IMR-90 (cell line): ENCODE measurements at regions of chr13 and their contacts with region 1.

Region 1: GRCh38 chr13:97809576-97809975 is 143.9 kb upstream of the IPO5 start:
- DNase-seq: peak; percentile 6
- ATAC-seq: no peak
- H3K4me3 ChIP-seq: no peak overlapping the region
- H3K27ac ChIP-seq: no peak overlapping the region
- H3K4me1 ChIP-seq: no peaks in the 10 kb centered on the region
- H3K27me3 ChIP-seq: peaks cover 8% of the 10 kb centered on the region
- CTCF ChIP-seq: no peak
- POLR2A ChIP-seq: no peak
- RAD21 ChIP-seq: no peak

Region 2: DNA sequence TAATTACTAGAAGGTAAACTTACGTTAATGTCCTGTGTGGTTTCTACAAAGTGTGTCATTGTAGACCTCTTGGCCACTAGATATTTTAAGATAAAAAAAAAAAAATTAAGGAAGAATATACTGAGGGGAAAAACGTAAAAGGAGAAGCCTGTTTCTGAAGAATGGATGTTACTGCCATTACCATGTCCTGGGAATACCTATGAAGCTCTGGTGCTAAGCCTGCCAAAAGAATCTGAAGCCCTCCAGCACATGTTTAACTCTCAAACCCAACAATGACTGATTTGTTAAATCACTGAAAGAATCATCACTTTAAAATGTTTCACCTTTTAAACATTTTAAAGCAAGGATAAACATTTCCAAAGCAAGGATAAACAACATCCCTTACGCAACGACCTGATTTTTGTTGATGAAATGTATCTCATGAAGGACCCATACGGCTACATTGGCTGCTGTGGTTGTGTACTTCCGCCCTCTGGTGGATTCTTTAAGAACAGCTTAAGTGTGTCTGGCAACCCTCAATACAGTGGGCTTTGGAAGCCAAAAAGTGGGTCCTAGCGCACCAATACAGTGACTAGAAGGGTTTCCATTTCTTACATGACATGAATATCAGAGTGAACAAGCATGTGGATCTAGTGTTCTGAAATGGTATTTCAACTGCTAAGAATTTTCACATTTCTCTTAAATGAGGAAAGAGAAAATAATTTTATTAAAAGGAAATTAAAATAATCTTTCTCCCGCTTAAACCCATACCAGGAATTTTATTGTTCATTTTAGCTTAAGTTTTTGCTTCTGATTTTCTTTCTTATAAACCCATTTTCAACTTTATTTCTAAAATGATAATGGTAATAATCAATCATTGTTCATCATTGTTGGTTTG is 450.2 kb before region 1 on chr13:
- CTCF ChIA-PET with region 1: no interaction called
- POLR2A ChIA-PET with region 1: no interaction called
- dilution Hi-C with region 1: no loop called
- in situ Hi-C with region 1: no loop called
- intact Hi-C with region 1: loop called (anchors 10 kb)
- DNase-seq: peak; percentile 92
- ATAC-seq: peak; percentile 95
- H3K4me3 ChIP-seq: no peak overlapping the region
- H3K27ac ChIP-seq: no peak overlapping the region
- H3K4me1 ChIP-seq: peaks cover 3% of the 10 kb centered on the region; the same call in 1 of the 2 replicates
- H3K27me3 ChIP-seq: no peaks in the 10 kb centered on the region
- CTCF ChIP-seq: peak; percentile 81
- POLR2A ChIP-seq: 0 out of 2 replicates have a peak, but pooled peaks have one; percentile 37
- RAD21 ChIP-seq: peak; percentile 91

Region 3: GRCh38 chr13:97395447-97396136 is 414.0 kb before region 1 on chr13:
- CTCF ChIA-PET with region 1: no interaction called
- POLR2A ChIA-PET with region 1: no interaction called
- dilution Hi-C with region 1: no loop called
- in situ Hi-C with region 1: no loop called
- intact Hi-C with region 1: loop called (anchors 10 kb)
- DNase-seq: peak; percentile 66
- ATAC-seq: peak; percentile 67
- H3K4me3 ChIP-seq: no peak overlapping the region
- H3K27ac ChIP-seq: peak overlapping the region; percentile 36; the same call in 1 of the 2 replicates
- H3K4me1 ChIP-seq: peaks cover 5% of the 10 kb centered on the region
- H3K27me3 ChIP-seq: no peaks in the 10 kb centered on the region
- CTCF ChIP-seq: no peak
- POLR2A ChIP-seq: no peak
- RAD21 ChIP-seq: no peak

Region 4: DNA sequence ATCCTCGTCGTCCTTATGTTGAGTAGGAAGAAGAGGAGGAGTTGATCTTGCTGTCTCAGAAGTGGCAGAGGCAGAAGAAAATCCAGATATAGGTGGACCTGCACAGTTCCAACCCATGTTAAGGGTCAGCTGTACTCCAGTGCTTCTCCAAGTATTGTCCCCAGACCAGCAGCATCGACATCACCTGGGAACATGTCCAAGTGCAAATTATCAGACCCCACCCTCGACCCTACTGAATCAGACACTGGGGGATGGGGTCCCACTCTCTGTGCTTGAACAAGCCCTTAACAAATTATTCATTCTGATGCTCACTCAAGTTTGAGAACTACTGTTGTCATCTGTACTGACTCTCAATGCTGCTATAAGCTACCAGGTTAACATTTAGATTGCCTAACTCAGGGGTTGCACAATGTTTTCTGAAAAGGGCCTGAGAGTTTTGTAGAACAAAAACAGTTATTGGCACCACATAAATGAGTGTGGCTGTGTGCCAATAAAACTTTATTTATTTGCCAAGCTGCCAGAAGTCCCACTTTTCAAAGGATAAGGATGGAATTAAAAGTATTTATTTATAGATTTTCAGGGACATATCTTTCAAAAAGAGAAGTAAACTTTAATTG is 82.8 kb before region 1 on chr13:
- CTCF ChIA-PET with region 1: no interaction called
- POLR2A ChIA-PET with region 1: no interaction called
- dilution Hi-C with region 1: no loop called
- in situ Hi-C with region 1: no loop called
- intact Hi-C with region 1: no loop called
- DNase-seq: no peak
- ATAC-seq: no peak
- H3K4me3 ChIP-seq: no peak overlapping the region
- H3K27ac ChIP-seq: no peak overlapping the region
- H3K4me1 ChIP-seq: no peaks in the 10 kb centered on the region
- H3K27me3 ChIP-seq: no peaks in the 10 kb centered on the region
- CTCF ChIP-seq: no peak
- POLR2A ChIP-seq: no peak
- RAD21 ChIP-seq: no peak

Region 5: DNA sequence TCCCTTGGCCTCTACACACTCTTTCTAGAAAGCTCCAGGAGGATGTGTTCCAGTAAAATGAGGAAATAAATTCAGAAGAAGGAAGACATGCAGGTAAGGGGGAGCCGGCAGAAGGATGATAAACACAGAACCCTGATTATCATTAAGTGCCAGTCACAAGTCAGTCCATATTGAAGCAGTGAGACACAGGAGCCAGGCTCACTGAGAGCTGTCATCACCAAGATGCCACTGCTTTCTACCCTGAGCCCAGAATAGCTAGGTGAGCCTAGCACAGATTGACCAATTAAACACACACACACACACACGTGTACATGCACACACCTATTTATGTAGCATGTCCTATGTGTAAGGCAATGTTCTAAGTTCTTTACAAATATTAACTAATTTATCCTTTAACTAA is 67.5 kb before region 1 on chr13:
- CTCF ChIA-PET with region 1: no interaction called
- POLR2A ChIA-PET with region 1: no interaction called
- dilution Hi-C with region 1: no loop called
- in situ Hi-C with region 1: no loop called
- intact Hi-C with region 1: no loop called
- DNase-seq: no peak
- ATAC-seq: no peak
- H3K4me3 ChIP-seq: no peak overlapping the region
- H3K27ac ChIP-seq: no peak overlapping the region
- H3K4me1 ChIP-seq: no peaks in the 10 kb centered on the region
- H3K27me3 ChIP-seq: 0 out of 2 replicates have a peak, but pooled peaks cover 1% of the 10 kb centered on the region
- CTCF ChIP-seq: no peak
- POLR2A ChIP-seq: no peak
- RAD21 ChIP-seq: no peak

Region 6: GRCh38 chr13:97858161-97858560 is 48.6 kb after region 1 on chr13:
- CTCF ChIA-PET with region 1: no interaction called
- POLR2A ChIA-PET with region 1: no interaction called
- dilution Hi-C with region 1: no loop called
- in situ Hi-C with region 1: no loop called
- intact Hi-C with region 1: no loop called
- DNase-seq: no peak
- ATAC-seq: no peak
- H3K4me3 ChIP-seq: no peak overlapping the region
- H3K27ac ChIP-seq: no peak overlapping the region
- H3K4me1 ChIP-seq: peaks cover 5% of the 10 kb centered on the region
- H3K27me3 ChIP-seq: no peaks in the 10 kb centered on the region
- CTCF ChIP-seq: no peak
- POLR2A ChIP-seq: no peak
- RAD21 ChIP-seq: no peak